ENCODE measurements at regions of chr14 and their contacts with region 1.

Region 1: GRCh38 chr14:94080471-94081289 is at the start of gene DDX24:
- DNase-seq: peak; percentile 96
- H3K4me3 Mint-ChIP-seq: peak within 1 kb of the TSS; percentile 100
- H3K27ac Mint-ChIP-seq: peak within 1 kb of the TSS; percentile 100
- H3K4me1 Mint-ChIP-seq: peaks cover 57% of the 10 kb centered on the region
- H3K27me3 Mint-ChIP-seq: no peaks in the 10 kb centered on the region
- total RNA-seq, gene DDX24: 252 and 271 TPM in 2 replicates

Region 2: GRCh38 chr14:93332853-93333630 is 747.6 kb before region 1 on chr14 and contains the start of gene BTBD7:
- intact Hi-C with region 1: loop called (anchors 2 kb)
- DNase-seq: peak; percentile 94
- H3K4me3 Mint-ChIP-seq: peak within 1 kb of the TSS; percentile 92
- H3K27ac Mint-ChIP-seq: peak within 1 kb of the TSS; percentile 92
- H3K4me1 Mint-ChIP-seq: peaks cover 49% of the 10 kb centered on the region
- H3K27me3 Mint-ChIP-seq: no peaks in the 10 kb centered on the region
- total RNA-seq, gene BTBD7: 20.6 and 22.8 TPM in 2 replicates

Region 3: DNA sequence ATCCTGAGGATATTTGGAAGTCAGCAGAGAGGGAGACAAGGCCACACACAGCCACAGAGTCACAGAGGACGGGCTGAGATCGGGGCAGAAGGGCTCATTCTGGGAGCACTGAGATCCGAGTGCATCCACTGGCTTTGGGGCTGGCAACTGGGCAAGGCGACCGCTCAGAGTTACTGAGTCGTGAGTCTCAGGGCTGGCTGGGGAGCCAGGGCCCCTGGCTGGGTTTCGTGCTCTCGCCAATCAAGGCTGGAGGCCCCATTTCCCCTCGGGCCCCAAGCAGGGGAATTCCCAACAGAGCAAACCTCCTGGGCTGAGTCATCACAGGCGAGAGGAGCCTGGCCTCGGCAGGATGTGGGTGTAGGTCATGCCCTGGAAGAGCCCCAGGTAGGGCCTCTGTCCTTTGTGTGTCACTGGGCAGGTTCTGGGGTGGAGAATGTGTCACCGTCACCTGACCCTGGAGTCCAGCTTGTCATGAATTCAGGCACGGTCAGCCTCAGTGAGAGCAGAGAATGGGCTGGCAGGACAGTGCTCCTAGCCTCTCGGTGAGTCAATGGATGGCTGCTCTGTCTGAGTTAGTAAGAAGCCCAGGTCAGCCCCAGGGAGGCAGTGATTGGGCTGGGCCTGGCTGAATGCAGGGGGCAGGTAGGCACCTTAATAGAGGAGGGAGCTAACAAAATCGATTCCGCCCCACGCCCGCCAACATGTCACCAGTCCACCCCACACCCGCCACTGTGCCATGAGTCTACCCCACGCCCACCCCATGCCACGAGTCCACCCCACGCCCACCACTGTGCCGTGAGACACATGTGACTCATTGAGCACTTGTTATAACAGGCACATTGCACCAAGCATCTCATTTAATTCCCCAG is 121.2 kb before region 1 on chr14:
- intact Hi-C with region 1: loop called (anchors 2 kb)
- DNase-seq: peak; percentile 94
- H3K4me3 Mint-ChIP-seq: peak overlapping the region; percentile 84
- H3K27ac Mint-ChIP-seq: peak overlapping the region; percentile 100
- H3K4me1 Mint-ChIP-seq: peaks cover 97% of the 10 kb centered on the region
- H3K27me3 Mint-ChIP-seq: no peaks in the 10 kb centered on the region

Region 4: GRCh38 chr14:94026173-94026888 is 54.3 kb before region 1 on chr14 and contains the start of gene OTUB2:
- intact Hi-C with region 1: loop called (anchors 1 kb)
- DNase-seq: peak; percentile 96
- H3K4me3 Mint-ChIP-seq: peak within 1 kb of the TSS; percentile 85
- H3K27ac Mint-ChIP-seq: peak within 1 kb of the TSS; percentile 60
- H3K4me1 Mint-ChIP-seq: peaks cover 39% of the 10 kb centered on the region
- H3K27me3 Mint-ChIP-seq: no peaks in the 10 kb centered on the region
- total RNA-seq, gene OTUB2: 1.5 TPM in 2 replicates

Region 5: GRCh38 chr14:94129111-94129757 is 48.6 kb after region 1 on chr14 and contains the start of gene IFI27L2:
- intact Hi-C with region 1: loop called (anchors 1 kb)
- DNase-seq: peak; percentile 59
- H3K4me3 Mint-ChIP-seq: peak within 1 kb of the TSS; percentile 87
- H3K27ac Mint-ChIP-seq: peak within 1 kb of the TSS; percentile 86
- H3K4me1 Mint-ChIP-seq: peaks cover 26% of the 10 kb centered on the region
- H3K27me3 Mint-ChIP-seq: peaks cover 20% of the 10 kb centered on the region
- total RNA-seq, gene IFI27L2: 33.5 and 36.1 TPM in 2 replicates

Region 6: DNA sequence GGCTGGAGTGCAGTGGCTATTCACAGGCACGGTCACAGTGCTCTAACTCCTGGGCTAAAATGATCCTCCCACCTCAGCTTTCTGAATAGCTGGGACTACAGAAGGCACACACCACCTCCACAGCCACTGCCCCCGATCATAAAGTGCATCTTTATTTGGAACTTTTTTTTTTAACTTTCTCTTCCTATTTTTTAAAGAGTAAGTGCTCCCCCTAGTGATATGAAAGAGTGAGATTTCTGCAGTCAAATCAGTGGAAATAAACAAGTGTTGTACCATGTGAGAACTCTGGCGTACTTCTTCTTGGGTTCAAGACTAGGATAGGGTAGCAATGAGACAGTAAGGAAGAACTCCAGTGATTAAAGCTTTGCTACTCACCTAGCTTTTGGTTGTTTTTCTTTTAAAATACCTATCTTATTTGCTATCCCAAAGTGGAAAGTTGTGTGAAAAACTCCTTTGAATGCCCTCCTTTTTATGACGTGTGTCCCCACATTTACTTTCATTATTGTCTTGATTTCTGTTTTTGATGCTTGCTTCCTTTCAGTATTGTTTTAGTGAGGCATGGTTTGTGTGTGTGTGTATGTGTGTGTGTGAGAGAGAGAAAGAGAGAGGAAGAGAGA is 100.1 kb after region 1 on chr14:
- intact Hi-C with region 1: loop called (anchors 2 kb)
- DNase-seq: no peak
- H3K4me3 Mint-ChIP-seq: peak overlapping the region; percentile 11
- H3K27ac Mint-ChIP-seq: peak overlapping the region; percentile 51
- H3K4me1 Mint-ChIP-seq: peaks cover 11% of the 10 kb centered on the region
- H3K27me3 Mint-ChIP-seq: peaks cover 30% of the 10 kb centered on the region

Region 7: DNA sequence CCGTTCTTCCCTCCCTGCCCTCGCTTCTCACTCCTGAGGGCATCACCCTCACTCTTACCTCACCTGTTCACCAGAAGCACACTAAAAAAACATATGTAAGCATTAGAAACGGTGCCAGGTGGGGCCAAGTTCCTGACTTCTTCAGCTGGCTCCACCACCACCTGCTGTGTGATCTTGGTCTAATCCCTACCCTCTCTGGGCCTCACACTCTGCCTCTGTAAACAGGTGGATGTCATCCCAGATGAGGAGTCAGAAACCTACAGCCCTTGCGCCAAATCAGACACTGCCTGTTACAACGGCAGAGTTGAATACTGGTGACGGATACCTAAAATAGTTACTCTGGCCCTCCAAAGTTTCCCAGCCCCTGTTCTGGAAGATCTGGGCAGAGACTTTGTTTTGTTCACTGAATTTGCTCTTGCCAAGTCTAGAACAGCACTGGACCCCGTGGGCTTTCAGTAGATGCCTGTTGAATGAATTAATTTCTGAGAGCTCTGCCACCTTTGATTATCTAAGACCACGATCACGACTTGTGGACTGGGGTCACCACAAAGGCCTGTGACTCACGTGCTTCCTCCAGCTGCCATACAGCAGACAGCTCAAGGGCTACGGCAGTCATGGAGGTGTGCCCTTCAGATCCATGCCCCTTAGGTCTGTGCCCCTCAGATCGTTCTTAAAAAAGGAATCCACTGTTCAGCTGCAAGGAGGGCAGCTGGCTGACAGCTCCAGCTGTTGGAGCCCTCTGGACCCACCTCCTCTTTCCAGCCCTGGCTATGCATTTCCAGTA is 617.3 kb after region 1 on chr14:
- intact Hi-C with region 1: no loop called
- DNase-seq: no peak
- H3K4me3 Mint-ChIP-seq: no peak overlapping the region
- H3K27ac Mint-ChIP-seq: no peak overlapping the region
- H3K4me1 Mint-ChIP-seq: no peaks in the 10 kb centered on the region
- H3K27me3 Mint-ChIP-seq: no peaks in the 10 kb centered on the region

Region 8: DNA sequence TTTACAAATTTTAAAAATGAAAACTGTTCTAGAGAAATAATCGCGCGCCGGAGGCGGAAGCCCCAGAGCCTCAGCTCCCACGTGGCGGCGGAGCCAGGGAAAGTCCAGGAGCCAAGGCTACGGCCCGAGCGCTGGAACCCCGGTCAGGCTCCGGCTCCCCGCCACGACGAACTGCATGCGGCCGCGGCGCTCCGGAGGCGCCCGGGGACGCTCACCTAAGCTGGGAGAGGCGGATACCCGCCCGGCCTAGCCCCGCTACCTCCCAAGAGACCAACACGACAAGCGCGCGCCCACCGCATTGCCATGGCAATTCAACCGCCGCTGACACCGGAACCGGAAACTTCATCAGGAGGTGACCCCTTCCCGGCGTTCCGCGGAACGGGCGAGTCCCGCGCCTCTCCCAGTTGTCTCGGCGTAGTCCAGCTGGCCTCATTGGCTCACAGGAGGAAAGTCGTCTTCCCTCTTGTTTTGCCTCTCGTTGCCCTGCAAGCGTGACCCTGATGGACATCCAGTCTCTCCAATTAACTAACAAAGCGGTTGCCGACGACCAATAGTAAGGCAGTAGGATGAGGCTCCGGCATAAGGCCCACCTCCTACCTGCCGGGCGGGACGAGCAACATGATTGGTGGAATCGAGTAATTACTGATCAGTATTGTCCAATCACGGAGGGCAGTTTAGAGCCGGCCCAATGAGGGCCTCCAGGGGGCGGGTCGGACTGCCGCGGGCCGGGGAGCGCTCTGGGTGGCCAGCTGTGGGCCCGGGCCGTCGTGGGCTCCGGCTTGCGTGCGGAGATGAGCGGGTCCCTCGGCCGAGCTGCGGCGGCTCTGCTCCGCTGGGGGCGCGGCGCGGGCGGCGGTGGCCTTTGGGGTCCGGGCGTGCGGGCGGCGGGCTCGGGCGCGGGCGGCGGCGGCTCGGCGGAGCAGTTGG is 1453.9 kb after region 1 on chr14 and contains the start of gene GLRX5:
- intact Hi-C with region 1: loop called (anchors 10 kb)
- DNase-seq: peak; percentile 98
- H3K4me3 Mint-ChIP-seq: peak within 1 kb of the TSS; percentile 98
- H3K27ac Mint-ChIP-seq: peak within 1 kb of the TSS; percentile 95
- H3K4me1 Mint-ChIP-seq: peaks cover 73% of the 10 kb centered on the region
- H3K27me3 Mint-ChIP-seq: no peaks in the 10 kb centered on the region
- total RNA-seq, gene GLRX5: 46.7 and 48.9 TPM in 2 replicates